Breast epithelium (tissue), 4 donors: ENCODE measurements at regions of chr11 and their contacts with region 1.

Region 1: DNA sequence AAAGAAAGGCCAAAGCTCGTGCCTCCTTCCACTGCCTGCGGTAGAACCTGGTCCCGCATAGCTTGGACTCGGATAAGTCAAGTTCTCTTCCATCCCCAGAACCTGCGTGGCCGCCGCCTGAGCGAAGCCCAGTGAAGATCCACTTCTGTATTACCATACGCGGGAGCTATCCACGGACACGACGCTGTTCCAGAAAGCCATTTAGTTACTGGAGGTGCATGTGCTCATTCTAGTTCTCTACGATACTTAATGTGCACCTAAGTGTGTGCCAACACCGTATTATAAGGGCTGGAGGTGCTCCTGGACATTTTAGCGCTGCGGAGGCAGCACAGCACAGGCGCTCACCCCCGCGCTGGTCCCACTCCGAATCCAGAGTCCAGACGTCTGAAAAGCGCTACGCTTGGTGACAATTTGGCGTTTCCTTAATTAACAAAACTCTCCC is 1.4 kb downstream of the WT1 start:
- DNase-seq: no peak
- H3K4me3 ChIP-seq: peak overlapping the region in 2 of 3 donors; percentile 36 to 60
- H3K27ac ChIP-seq: no peak overlapping the region
- H3K4me1 ChIP-seq: peaks cover 4 to 19% of the 10 kb centered on the region in 2 donors
- H3K27me3 ChIP-seq: peaks cover 5 to 100% of the 10 kb centered on the region in 2 donors
- CTCF ChIP-seq: no peak
- POLR2A ChIP-seq: no peak

Region 2: GRCh38 chr11:32485733-32486132 is 51.8 kb after region 1 on chr11:
- intact Hi-C with region 1: loop called (anchors 2 kb)
- DNase-seq: no peak
- H3K4me3 ChIP-seq: no peak overlapping the region
- H3K27ac ChIP-seq: no peak overlapping the region
- H3K4me1 ChIP-seq: no peaks in the 10 kb centered on the region
- H3K27me3 ChIP-seq: no peaks in the 10 kb centered on the region
- CTCF ChIP-seq: no peak
- POLR2A ChIP-seq: no peak

Region 3: GRCh38 chr11:32968541-32968940 is 534.6 kb after region 1 on chr11:
- intact Hi-C with region 1: no loop called
- DNase-seq: no peak
- H3K4me3 ChIP-seq: no peak overlapping the region
- H3K27ac ChIP-seq: no peak overlapping the region
- H3K4me1 ChIP-seq: no peaks in the 10 kb centered on the region
- H3K27me3 ChIP-seq: no peaks in the 10 kb centered on the region
- CTCF ChIP-seq: no peak
- POLR2A ChIP-seq: no peak